CD8-positive, alpha-beta memory T cell (primary cell): ENCODE measurements at regions of chr6 and their contacts with region 1.

Region 1: DNA sequence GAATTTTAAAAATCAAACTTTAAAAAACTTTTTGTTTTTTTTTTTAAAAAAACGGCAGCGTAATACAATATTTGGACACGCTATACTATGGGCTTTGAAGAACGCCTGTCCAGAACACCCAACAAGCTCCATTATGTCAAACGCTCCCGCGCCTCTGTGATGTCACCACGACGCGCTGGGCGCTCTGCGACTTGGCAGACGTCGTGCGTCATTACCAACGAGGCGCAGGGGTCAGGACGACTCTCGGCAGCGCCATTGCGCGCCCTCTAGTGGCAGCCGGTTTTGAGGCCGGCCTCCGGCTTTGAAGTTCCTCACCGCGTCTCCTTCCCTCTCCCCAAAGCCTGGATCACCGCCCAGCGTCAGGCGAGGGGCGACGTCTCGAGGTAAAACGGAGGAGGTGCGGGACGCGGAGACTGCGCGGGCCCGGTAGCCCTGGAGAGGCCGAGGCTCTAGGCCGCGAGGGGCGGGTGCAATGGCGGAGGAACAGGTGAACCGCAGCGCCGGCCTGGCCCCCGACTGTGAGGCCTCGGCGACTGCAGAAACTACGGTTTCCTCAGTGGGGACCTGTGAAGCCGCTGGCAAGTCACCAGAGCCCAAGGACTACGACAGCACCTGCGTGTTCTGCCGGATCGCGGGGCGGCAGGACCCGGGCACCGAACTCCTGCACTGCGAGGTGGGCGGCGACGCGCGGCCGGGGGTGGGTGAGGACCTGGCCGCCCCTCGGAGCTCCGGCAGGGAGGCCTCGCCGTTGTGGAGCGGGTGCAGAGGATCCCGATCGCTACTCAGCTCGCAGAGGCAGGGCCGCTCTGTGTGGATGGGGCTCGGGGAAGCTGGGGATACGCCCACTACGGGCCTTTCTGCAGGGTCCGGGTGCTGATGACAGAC is at the start of gene HINT3:
- DNase-seq: peak; percentile 95 to 98 (median 97)
- H3K4me3 ChIP-seq: peak within 1 kb of the TSS; percentile 57
- H3K4me3 Mint-ChIP-seq: no peak within 1 kb of the TSS
- H3K27ac ChIP-seq: peak within 1 kb of the TSS; percentile 95
- H3K27ac Mint-ChIP-seq: no peak within 1 kb of the TSS
- H3K4me1 ChIP-seq: peaks cover 29% of the 10 kb centered on the region
- H3K4me1 Mint-ChIP-seq: peaks cover 10 to 18% (median 12%) of the 10 kb centered on the region in 3 donors
- H3K27me3 ChIP-seq: no peaks in the 10 kb centered on the region
- H3K27me3 Mint-ChIP-seq: peaks cover 2 to 6% of the 10 kb centered on the region in 2 donors
- total RNA-seq, gene HINT3: 12.1 to 12.8 TPM

Region 2: GRCh38 chr6:125779924-125780539 is 176.7 kb before region 1 on chr6:
- CTCF ChIA-PET with region 1: interaction called, 36 read pairs
- POLR2A ChIA-PET with region 1: interaction called, 31 read pairs
- DNase-seq: peak; percentile 75 to 94 (median 90)
- H3K4me3 ChIP-seq: peak overlapping the region; percentile 86
- H3K4me3 Mint-ChIP-seq: no peak overlapping the region
- H3K27ac ChIP-seq: peak overlapping the region; percentile 94
- H3K27ac Mint-ChIP-seq: no peak overlapping the region
- H3K4me1 ChIP-seq: peaks cover 17% of the 10 kb centered on the region
- H3K4me1 Mint-ChIP-seq: peaks cover 0 to 11% (median 10%) of the 10 kb centered on the region in 3 donors
- H3K27me3 ChIP-seq: no peaks in the 10 kb centered on the region
- H3K27me3 Mint-ChIP-seq: no peaks in the 10 kb centered on the region

Region 3: GRCh38 chr6:125918681-125919566 is 37.8 kb before region 1 on chr6:
- CTCF ChIA-PET with region 1: interaction called, 17 read pairs
- POLR2A ChIA-PET with region 1: no interaction called
- DNase-seq: peak in 4 of 5 donors; percentile 32 to 65 (median 44)
- H3K4me3 ChIP-seq: peak overlapping the region; percentile 38
- H3K4me3 Mint-ChIP-seq: peak overlapping the region; percentile 25 to 74 (median 59)
- H3K27ac ChIP-seq: peak overlapping the region; percentile 60
- H3K27ac Mint-ChIP-seq: peak overlapping the region; percentile 85 to 96 (median 90)
- H3K4me1 ChIP-seq: peaks cover 9% of the 10 kb centered on the region
- H3K4me1 Mint-ChIP-seq: peaks cover 22 to 30% (median 25%) of the 10 kb centered on the region in 3 donors
- H3K27me3 ChIP-seq: no peaks in the 10 kb centered on the region
- H3K27me3 Mint-ChIP-seq: no peaks in the 10 kb centered on the region

Region 4: GRCh38 chr6:125944434-125944816 is 12.3 kb before region 1 on chr6:
- CTCF ChIA-PET with region 1: interaction called, 26 read pairs
- POLR2A ChIA-PET with region 1: no interaction called
- DNase-seq: no peak
- H3K4me3 ChIP-seq: no peak overlapping the region
- H3K4me3 Mint-ChIP-seq: no peak overlapping the region
- H3K27ac ChIP-seq: no peak overlapping the region
- H3K27ac Mint-ChIP-seq: no peak overlapping the region
- H3K4me1 ChIP-seq: no peaks in the 10 kb centered on the region
- H3K4me1 Mint-ChIP-seq: no peaks in the 10 kb centered on the region
- H3K27me3 ChIP-seq: peaks cover 4% of the 10 kb centered on the region
- H3K27me3 Mint-ChIP-seq: peaks cover under 1 to 26% of the 10 kb centered on the region in 2 donors

Region 5: DNA sequence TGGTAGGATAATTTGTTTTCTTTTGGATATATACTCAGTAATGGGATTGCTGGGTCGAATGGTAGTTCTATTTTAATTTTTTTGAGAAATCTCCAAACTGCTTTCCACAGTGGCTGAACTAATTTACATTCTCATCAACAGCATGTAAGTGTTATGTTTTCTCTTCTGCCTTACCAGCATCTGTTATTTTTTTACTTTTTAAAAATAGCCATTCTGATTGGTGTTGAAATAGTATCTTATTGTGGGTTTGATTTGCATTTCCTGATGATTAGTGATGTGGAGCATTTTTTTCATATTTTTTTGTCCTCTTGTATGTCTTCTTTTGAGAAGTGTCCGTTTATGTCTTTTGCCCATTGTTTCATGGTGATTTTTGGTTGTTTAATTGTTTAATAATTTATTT is 11.7 kb after region 1 on chr6:
- CTCF ChIA-PET with region 1: interaction called, 26 read pairs
- POLR2A ChIA-PET with region 1: interaction called, 4 read pairs
- DNase-seq: no peak
- H3K4me3 ChIP-seq: no peak overlapping the region
- H3K4me3 Mint-ChIP-seq: no peak overlapping the region
- H3K27ac ChIP-seq: no peak overlapping the region
- H3K27ac Mint-ChIP-seq: peak overlapping the region in 2 of 8 donors; percentile 14 to 44
- H3K4me1 ChIP-seq: no peaks in the 10 kb centered on the region
- H3K4me1 Mint-ChIP-seq: peaks cover 30 to 55% (median 48%) of the 10 kb centered on the region in 3 donors
- H3K27me3 ChIP-seq: no peaks in the 10 kb centered on the region
- H3K27me3 Mint-ChIP-seq: peaks cover 0 to 1% of the 10 kb centered on the region in 2 donors

Region 6: GRCh38 chr6:125974214-125974866 is 17.6 kb after region 1 on chr6:
- CTCF ChIA-PET with region 1: interaction called, 26 read pairs
- POLR2A ChIA-PET with region 1: interaction called, 4 read pairs
- DNase-seq: peak in 2 of 5 donors; percentile 28 to 40
- H3K4me3 ChIP-seq: no peak overlapping the region
- H3K4me3 Mint-ChIP-seq: no peak overlapping the region
- H3K27ac ChIP-seq: no peak overlapping the region
- H3K27ac Mint-ChIP-seq: peak overlapping the region in 1 of 8 donors; percentile 26
- H3K4me1 ChIP-seq: no peaks in the 10 kb centered on the region
- H3K4me1 Mint-ChIP-seq: peaks cover 9 to 15% (median 12%) of the 10 kb centered on the region in 3 donors
- H3K27me3 ChIP-seq: no peaks in the 10 kb centered on the region
- H3K27me3 Mint-ChIP-seq: no peaks in the 10 kb centered on the region

Region 7: DNA sequence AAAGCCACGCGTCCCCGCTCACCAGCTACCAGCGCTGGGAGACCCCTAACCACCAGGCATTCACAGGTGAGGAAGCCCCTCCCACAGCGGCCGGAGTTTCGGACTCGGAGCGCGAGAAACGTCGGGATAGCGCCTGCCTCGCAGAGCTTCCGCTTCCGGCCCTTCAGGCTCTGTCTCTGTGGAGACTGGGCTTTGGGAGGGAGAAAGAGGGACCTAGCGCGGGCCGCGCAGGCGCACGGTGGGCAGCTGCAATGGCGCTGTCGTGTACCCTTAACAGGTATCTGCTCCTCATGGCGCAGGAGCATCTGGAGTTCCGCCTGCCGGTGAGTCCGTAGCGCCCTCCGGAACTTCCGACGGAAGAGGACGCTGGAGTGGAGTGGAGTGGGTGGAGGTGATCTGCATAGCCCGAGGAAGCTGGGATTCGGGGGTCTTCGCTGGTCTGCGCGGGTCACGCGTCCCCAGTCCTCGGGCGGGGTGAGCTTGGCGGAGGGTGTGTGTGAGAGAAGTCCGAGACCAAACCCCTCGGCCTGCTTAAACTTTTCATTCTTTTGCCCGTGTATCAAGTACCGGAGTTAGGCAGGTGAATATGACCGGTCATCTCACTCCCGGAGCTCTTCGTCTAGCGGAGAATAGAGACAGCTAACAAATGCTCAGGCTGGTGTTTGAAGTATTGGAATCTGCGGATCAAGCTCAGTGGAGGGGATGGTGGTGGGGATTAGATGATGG is 29.7 kb after region 1 on chr6 and contains the start of gene TRMT11:
- CTCF ChIA-PET with region 1: interaction called, 25 read pairs
- POLR2A ChIA-PET with region 1: interaction called, 9 read pairs
- DNase-seq: peak; percentile 72 to 91 (median 82)
- H3K4me3 ChIP-seq: peak within 1 kb of the TSS; percentile 92
- H3K4me3 Mint-ChIP-seq: peak within 1 kb of the TSS in 6 of 7 donors; percentile 5 to 54 (median 33)
- H3K27ac ChIP-seq: peak within 1 kb of the TSS; percentile 87
- H3K27ac Mint-ChIP-seq: peak within 1 kb of the TSS in 1 of 8 donors; percentile 5
- H3K4me1 ChIP-seq: peaks cover 34% of the 10 kb centered on the region
- H3K4me1 Mint-ChIP-seq: peaks cover 9 to 15% (median 13%) of the 10 kb centered on the region in 3 donors
- H3K27me3 ChIP-seq: no peaks in the 10 kb centered on the region
- H3K27me3 Mint-ChIP-seq: no peaks in the 10 kb centered on the region
- total RNA-seq, gene TRMT11: 35.8 to 37.9 TPM